ENCODE measurements at regions of chr3 and their contacts with region 1.

Region 1: DNA sequence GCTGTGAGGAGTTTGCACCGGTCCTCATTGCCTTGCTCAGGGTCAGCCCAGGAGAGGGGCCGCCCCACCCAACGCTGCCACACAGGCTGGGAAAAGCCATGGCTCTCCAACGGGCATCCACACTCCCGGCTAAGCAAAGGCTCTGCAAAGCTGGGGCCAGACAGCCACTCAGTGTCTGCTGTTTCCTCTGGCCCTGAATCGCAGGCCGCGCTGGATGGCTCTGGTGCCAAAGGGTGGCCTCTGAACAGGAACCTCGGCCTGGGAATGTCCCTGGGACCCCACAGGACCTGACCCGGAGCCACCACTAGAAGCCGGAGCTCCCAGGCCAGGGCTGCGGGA is 42.9 kb downstream of the RPN1 start:
- DNase-seq: no peak

Region 2: GRCh38 chr3:128170805-128171516 is 436.7 kb before region 1 on chr3:
- intact Hi-C with region 1: loop called (anchors 5 kb)
- DNase-seq: no peak

Region 3: DNA sequence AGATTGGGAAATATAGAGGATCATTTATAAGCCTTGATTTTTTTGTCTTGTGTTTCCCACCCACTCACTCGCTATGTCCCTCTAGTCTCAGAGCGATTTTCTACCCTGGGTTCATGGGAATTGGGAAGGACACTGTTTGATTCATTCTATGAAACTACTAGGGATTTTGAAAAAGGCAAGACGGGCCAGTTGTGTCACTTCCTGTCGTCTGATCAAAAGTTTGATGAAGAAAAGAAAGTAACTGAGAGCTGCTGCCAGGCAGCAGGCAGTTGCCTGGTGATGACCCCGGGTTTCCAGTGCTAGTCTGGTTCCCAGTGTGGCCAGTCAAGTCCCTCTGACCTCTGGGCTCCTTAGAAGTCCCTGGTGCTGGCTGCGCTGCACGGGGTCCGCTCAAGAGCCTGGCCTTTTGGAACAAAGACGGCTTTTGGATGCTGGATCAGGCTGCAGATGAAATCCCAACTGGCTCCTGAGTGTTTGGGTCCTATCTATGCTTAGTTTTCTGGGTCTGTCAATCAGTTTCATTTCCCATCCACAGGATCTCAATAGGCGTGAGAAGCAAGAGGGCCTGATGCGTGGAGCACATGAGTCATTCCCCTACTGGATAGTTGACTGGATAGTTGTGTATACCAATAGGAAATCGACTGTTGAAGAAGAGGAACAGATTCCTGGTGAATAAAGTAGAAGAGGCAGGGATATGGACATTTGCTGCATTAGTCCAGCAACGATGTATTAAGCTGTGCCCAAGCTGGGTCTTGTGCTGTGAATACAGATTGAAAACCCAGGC is 364.7 kb before region 1 on chr3:
- intact Hi-C with region 1: no loop called
- DNase-seq: no peak

Measured in cardiac septum (tissue), 1 donor.